Activated CD4-positive, alpha-beta memory T cell treated with anti-CD3 and anti-CD28 coated beads for 36 hours (primary cell): ENCODE measurements at regions of chr17 and their contacts with region 1.

Region 1: DNA sequence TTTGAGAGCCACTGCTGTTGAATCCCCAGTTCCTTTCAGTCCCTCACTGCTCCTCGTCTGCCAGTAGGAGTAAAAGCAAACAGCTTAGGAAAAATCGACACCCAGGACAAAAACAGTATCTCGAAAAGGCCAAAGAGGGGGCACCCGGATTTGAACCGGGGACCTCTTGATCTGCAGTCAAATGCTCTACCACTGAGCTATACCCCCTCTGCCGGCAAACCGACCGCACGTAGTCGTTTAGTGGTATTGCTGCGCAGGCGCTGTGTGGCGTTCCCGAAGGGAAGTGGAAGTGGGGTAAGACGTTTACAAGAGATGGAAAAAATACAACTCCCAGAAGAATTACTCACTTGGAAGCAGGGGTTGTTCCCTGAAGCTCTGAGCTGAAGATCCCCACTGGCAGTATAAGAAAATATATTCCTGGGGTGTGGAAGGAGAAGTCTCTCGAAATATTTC is 2.2 kb upstream of the PLXDC1 start:
- DNase-seq: peak; percentile 96
- H3K4me3 Mint-ChIP-seq: peak overlapping the region; percentile 94
- H3K27ac Mint-ChIP-seq: peak overlapping the region; percentile 90
- H3K4me1 Mint-ChIP-seq: peaks cover 30% of the 10 kb centered on the region
- H3K27me3 Mint-ChIP-seq: peaks cover 8% of the 10 kb centered on the region

Region 2: GRCh38 chr17:38702166-38702899 is 451.3 kb before region 1 on chr17:
- CTCF ChIA-PET with region 1: no interaction called
- POLR2A ChIA-PET with region 1: no interaction called
- intact Hi-C with region 1: loop called (anchors 5 kb)
- DNase-seq: peak; percentile 92
- H3K4me3 Mint-ChIP-seq: peak overlapping the region; percentile 100
- H3K27ac Mint-ChIP-seq: peak overlapping the region; percentile 100
- H3K4me1 Mint-ChIP-seq: peaks cover 42% of the 10 kb centered on the region
- H3K27me3 Mint-ChIP-seq: no peaks in the 10 kb centered on the region

Region 3: GRCh38 chr17:38868817-38869525 is 284.7 kb before region 1 on chr17:
- CTCF ChIA-PET with region 1: interaction called, 13 read pairs
- POLR2A ChIA-PET with region 1: interaction called, 3 read pairs
- intact Hi-C with region 1: loop called (anchors 1 kb)
- DNase-seq: peak; percentile 94
- H3K4me3 Mint-ChIP-seq: peak overlapping the region; percentile 87
- H3K27ac Mint-ChIP-seq: peak overlapping the region; percentile 96
- H3K4me1 Mint-ChIP-seq: peaks cover 44% of the 10 kb centered on the region
- H3K27me3 Mint-ChIP-seq: peaks cover 2% of the 10 kb centered on the region

Region 4: DNA sequence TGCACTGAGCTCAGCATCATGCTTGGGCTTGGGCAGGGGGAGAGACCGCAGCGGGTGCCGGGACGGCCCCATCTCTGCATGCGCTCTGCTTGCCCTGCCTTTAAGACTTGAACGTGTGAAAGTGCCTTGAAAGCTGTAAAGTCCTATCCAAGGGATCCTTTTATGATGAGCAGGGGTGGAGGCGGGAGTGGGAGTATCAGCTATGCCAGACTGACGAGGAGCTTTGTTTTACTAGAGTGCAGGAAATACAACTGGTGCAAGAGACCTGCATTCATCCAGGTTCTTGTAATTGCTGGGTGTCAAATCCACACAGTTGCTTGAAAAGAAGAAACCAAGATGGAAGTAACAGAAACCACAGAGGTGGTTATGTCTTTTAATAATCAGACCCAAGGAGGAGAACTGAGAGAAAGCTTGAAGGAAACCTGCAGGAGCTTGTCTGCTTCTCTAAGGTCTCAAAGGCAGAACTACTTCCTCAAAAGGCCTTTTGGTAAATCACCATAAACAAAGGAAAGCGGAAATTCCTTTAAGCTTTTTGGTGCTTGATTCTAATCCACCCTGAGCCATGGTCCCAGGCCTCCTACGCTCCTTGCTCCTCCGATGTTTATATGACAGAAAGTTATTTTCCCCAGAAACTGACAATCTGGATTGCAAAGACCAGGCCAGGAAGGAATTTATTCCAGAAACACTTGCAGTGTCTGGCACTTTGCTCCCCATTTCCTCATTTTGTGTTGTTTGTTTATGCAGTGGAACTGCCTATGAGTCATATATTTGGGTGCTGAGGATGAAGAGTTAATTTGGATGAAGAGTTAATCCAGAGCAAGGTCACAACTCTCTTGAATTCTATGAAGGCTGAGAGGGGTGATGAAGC is 135.1 kb before region 1 on chr17:
- CTCF ChIA-PET with region 1: interaction called, 15 read pairs
- POLR2A ChIA-PET with region 1: no interaction called
- intact Hi-C with region 1: no loop called
- DNase-seq: peak; percentile 56
- H3K4me3 Mint-ChIP-seq: no peak overlapping the region
- H3K27ac Mint-ChIP-seq: no peak overlapping the region
- H3K4me1 Mint-ChIP-seq: peaks cover 30% of the 10 kb centered on the region
- H3K27me3 Mint-ChIP-seq: no peaks in the 10 kb centered on the region

Region 5: DNA sequence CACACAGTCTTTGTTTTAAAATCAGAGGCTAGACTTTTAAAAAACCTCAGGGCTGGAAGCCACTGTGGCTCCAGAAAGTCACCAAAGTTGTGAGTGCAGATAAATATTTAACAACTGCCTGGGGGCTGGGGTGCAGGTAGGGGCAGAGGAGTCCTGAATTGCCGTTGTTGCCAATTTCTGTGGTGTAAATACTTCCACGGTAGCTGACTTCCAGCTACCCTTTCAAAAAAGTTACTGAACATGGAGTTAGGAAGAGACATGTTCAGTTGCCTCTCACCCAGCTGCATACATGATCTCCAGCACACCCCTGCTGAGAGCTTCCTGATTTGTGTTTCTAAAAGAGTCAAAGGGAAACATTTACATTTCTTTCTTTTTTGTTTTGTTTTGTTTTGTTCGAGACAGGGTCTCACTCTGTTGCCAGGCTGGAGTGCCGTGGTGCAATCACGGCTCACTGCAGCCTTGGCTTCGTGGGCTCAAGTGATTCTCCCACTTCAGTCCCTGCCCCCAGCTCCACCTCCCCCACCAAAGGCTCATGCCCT is 60.9 kb before region 1 on chr17:
- CTCF ChIA-PET with region 1: interaction called, 6 read pairs
- POLR2A ChIA-PET with region 1: interaction called, 3 read pairs
- intact Hi-C with region 1: loop called (anchors 1 kb)
- DNase-seq: peak; percentile 13
- H3K4me3 Mint-ChIP-seq: peak overlapping the region; percentile 38
- H3K27ac Mint-ChIP-seq: peak overlapping the region; percentile 66
- H3K4me1 Mint-ChIP-seq: peaks cover 60% of the 10 kb centered on the region
- H3K27me3 Mint-ChIP-seq: no peaks in the 10 kb centered on the region

Region 6: GRCh38 chr17:39199820-39200069 is 46.1 kb after region 1 on chr17:
- CTCF ChIA-PET with region 1: interaction called, 11 read pairs
- POLR2A ChIA-PET with region 1: interaction called, 7 read pairs
- intact Hi-C with region 1: loop called (anchors 5 kb)
- DNase-seq: peak; percentile 93
- H3K4me3 Mint-ChIP-seq: peak overlapping the region; percentile 95
- H3K27ac Mint-ChIP-seq: peak overlapping the region; percentile 97
- H3K4me1 Mint-ChIP-seq: peaks cover 59% of the 10 kb centered on the region
- H3K27me3 Mint-ChIP-seq: no peaks in the 10 kb centered on the region

Region 7: GRCh38 chr17:39306509-39307212 is 153.0 kb after region 1 on chr17:
- CTCF ChIA-PET with region 1: no interaction called
- POLR2A ChIA-PET with region 1: no interaction called
- intact Hi-C with region 1: no loop called
- DNase-seq: no peak
- H3K4me3 Mint-ChIP-seq: no peak overlapping the region
- H3K27ac Mint-ChIP-seq: no peak overlapping the region
- H3K4me1 Mint-ChIP-seq: no peaks in the 10 kb centered on the region
- H3K27me3 Mint-ChIP-seq: no peaks in the 10 kb centered on the region

Region 8: DNA sequence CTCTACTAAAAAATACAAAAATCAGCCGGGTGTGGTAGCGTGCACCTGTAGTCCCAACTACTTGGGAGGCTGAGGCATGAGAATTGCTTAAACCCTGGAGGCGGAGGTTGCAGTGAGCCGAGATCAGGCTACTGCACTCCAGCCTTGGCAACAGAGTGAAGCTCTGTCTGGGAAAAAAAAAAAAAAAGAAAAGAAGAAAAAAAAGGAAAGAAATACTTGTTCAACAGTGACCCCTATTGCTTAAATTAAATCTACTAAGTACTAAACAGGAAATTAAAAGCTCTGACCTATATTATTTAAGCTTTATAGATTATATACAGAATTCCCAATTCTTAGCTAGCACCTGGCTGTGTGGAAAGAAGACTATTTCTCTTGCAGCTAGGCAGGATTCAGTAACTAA is 198.9 kb after region 1 on chr17:
- CTCF ChIA-PET with region 1: no interaction called
- POLR2A ChIA-PET with region 1: no interaction called
- intact Hi-C with region 1: no loop called
- DNase-seq: no peak
- H3K4me3 Mint-ChIP-seq: no peak overlapping the region
- H3K27ac Mint-ChIP-seq: no peak overlapping the region
- H3K4me1 Mint-ChIP-seq: peaks cover 2% of the 10 kb centered on the region
- H3K27me3 Mint-ChIP-seq: no peaks in the 10 kb centered on the region